ENCODE measurements at regions of chr15 and their contacts with region 1.

Region 1: DNA sequence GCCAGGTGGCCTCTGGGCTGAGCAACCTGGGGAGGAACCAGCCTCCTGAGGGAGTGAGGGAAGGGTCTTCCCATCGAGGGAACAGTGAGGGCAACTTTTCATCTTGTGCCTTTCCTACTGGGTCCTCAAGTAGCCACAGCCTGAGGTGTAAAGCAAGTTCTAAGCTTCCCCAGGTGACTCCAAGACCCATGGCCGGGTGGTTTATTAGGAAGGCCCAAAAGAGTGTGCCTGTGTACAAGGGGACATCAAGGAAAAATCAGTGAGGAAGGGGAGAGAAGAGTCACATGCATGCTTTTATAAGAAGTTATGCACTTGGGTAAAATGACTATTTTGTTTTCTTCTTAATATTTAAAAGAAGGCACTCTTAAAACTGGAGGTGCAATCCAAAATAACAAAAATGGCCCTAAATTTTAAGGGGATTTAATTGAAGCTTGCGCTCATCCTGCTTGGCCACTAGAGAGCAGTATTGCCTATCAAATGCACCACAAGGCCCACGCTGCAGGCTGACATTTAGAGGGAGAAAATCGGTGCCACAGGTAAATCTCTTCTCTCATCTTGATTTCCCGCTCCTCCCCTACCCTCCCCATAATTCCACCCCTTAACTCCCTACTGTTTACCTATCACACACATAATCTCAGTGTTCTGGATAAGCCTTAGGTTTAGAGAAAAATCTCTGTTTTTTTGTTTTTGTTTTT is 6.7 kb downstream of the NANOGP8 start:
- DNase-seq: peak; percentile 16
- H3K4me3 ChIP-seq: no peak overlapping the region
- H3K27ac ChIP-seq: no peak overlapping the region
- H3K4me1 ChIP-seq: no peaks in the 10 kb centered on the region
- H3K27me3 ChIP-seq: no peaks in the 10 kb centered on the region
- CTCF ChIP-seq: peak; percentile 79 to 83

Region 2: DNA sequence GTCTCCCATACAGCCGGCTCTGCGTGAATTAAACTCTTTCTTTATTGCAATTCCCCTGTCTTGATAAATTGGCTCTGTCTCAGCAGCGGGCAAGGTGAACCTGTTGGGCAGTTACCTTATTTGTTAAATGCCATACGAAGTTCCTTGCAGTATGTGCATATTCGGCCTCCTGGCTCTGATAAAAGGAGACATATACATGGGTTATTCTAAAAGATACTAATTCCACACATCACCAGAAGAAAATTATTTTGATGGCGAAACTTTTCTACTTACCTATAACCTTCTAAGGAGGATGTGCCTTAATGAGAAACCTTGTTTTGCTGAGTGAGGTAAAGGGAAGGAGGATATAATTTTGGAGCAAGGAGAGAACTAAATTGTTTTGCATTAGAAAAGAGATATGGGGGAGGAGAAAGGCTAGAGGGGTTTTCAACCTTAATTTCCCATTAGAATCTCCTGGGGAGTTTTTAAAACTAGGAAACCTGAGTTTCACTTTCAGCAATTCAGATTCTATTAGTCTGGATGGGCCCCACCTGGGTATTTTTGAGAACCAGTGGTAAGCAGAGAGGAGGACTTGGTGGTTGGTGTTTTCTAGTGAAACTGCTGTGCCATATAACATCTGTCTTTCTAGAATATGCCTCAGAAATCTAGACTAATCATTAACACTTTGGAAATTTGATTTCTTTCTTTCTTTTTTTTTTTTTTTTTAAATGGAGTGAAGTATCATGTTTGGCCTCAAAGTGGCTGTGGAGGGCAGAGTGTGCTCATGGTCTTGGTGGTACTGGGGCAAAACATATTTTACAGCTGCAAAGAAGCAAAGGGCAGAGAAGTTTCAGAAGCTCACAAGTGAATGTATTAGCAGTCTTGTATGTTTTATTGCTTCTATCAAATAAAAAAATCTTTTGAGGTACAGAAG is 16.3 kb before region 1 on chr15:
- CTCF ChIA-PET with region 1: no interaction called
- dilution Hi-C with region 1: no loop called
- in situ Hi-C with region 1: no loop called
- intact Hi-C with region 1: no loop called
- DNase-seq: no peak
- H3K4me3 ChIP-seq: no peak overlapping the region
- H3K27ac ChIP-seq: no peak overlapping the region
- H3K4me1 ChIP-seq: no peaks in the 10 kb centered on the region
- H3K27me3 ChIP-seq: no peaks in the 10 kb centered on the region
- CTCF ChIP-seq: no peak

Region 3: DNA sequence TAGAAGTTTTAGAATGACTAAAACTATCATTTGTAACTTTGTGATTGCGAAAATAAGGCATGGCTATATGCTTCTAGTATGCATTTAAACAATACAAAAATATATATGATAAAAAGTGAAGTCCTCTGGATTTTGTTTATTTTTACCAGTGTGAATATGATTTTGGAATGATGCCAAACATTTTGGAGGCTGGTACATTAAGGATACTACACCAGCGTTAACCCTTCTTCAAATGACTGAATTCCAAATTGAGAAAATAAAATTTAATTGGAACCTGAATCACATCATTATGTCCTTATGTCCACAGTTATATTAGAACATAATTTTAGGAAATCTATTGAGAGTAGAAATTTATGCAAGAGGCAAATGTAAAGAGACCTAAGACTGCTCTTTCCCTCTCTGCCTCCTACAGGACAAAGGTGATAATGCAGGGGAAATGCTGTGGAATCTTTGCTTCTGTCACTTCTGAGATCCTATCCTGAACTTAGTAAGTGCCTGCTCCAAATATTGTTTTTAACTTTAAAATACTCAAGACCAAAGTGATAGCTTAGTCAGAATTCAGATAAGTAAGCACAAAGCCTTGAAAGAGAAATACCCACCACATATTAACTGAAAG is 127.8 kb after region 1 on chr15:
- CTCF ChIA-PET with region 1: no interaction called
- dilution Hi-C with region 1: no loop called
- in situ Hi-C with region 1: no loop called
- intact Hi-C with region 1: loop called (anchors 2 kb)
- DNase-seq: peak; percentile 10
- H3K4me3 ChIP-seq: no peak overlapping the region
- H3K27ac ChIP-seq: no peak overlapping the region
- H3K4me1 ChIP-seq: no peaks in the 10 kb centered on the region
- H3K27me3 ChIP-seq: no peaks in the 10 kb centered on the region
- CTCF ChIP-seq: peak; percentile 52 to 69

Region 4: DNA sequence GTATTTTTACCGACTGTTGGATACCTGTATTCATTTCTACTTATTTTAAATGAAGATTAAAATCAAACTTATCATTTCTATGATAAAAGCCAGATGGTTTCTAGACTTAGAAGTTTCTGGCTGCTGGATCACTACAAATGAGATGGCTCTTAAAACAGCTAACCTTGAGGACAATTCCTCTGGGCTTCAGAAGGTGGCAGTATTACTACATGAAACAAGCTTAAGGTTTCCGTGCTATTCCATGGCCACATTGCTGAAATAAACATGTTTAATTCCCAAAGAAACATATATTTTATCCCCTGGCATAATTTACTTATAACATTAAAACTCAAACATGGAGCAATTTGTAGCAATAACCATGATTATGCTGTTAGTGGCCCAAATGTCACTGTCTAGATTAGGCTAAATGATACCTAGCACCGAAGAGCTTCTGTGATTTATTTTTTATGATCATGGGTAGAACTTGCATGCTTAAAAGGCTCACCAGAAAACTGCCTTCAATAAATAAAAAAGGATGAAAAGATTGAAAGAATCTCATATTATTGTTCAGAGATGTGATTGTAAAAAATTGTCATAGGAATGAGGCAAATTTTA is 210.8 kb after region 1 on chr15:
- CTCF ChIA-PET with region 1: interaction called, 3 read pairs
- dilution Hi-C with region 1: no loop called
- in situ Hi-C with region 1: loop called in 1 of 2 experiments (anchors 25 kb)
- intact Hi-C with region 1: no loop called
- DNase-seq: peak; percentile 34
- H3K4me3 ChIP-seq: no peak overlapping the region
- H3K27ac ChIP-seq: no peak overlapping the region
- H3K4me1 ChIP-seq: peaks cover 12% of the 10 kb centered on the region
- H3K27me3 ChIP-seq: no peaks in the 10 kb centered on the region
- CTCF ChIP-seq: peak; percentile 84 to 88

Region 5: DNA sequence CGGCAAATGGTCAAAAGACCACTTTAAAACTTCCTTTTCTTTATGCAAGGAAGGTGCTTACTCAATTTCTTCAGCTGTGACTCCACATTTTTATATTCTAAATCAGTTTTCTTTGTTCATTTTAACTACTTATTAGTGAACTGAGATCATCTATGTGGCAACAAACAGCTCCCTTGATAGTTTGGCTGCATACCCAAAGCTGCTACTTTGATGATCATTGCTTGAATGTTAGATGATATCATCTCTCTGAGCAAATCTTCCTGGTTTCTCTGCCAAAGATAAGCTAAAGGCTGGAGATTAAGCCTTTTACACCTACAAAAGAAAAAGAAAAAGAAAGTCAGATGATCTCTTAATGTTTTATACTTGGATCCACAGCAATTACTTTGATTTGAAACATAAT is 372.1 kb after region 1 on chr15:
- CTCF ChIA-PET with region 1: no interaction called
- dilution Hi-C with region 1: no loop called
- in situ Hi-C with region 1: loop called (anchors 25 kb)
- intact Hi-C with region 1: no loop called
- DNase-seq: peak; percentile 8
- H3K4me3 ChIP-seq: no peak overlapping the region
- H3K27ac ChIP-seq: no peak overlapping the region
- H3K4me1 ChIP-seq: no peaks in the 10 kb centered on the region
- H3K27me3 ChIP-seq: no peaks in the 10 kb centered on the region
- CTCF ChIP-seq: no peak

Region 6: DNA sequence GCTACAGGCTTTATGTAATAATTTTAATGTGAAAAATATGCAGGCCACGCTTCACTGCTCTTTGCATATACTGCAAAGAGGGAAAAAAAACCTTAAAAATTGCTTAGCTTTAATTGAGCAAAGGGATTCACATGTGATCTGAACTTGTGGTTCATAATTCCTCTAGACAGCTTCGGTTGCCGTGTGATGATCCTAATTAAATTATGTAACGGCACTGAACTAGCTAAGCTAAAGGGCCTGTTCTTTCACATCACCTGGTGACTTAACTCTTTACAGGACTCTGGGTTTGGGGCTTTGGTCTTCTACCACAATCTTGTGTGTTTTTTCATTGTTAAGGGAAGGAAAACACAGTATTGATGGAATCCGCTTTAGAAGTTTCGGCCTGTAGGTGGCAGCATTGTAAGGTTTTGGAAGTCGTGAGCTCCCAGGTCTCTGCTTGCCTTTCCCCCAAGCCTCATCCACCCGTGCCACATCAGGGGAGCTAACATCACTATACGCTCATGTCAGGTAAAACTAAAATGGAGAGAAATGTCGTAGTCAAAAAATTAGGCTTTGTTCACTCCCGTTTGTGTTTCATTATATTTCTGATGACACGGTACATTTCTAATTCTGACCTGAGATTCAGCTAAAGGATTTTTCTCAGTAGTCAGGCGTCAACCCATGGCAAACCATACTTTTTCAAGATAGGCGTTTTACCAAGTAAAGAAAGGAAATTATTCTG is 673.2 kb after region 1 on chr15:
- CTCF ChIA-PET with region 1: no interaction called
- dilution Hi-C with region 1: no loop called
- in situ Hi-C with region 1: no loop called
- intact Hi-C with region 1: no loop called
- DNase-seq: peak; percentile 57
- H3K4me3 ChIP-seq: no peak overlapping the region
- H3K27ac ChIP-seq: no peak overlapping the region
- H3K4me1 ChIP-seq: no peaks in the 10 kb centered on the region
- H3K27me3 ChIP-seq: no peaks in the 10 kb centered on the region
- CTCF ChIP-seq: peak; percentile 74 to 82

Measured in mammary epithelial cell (primary cell).